Esophagus muscularis mucosa (tissue), 4 donors: ENCODE measurements at regions of chr5 and their contacts with region 1.

Region 1: GRCh38 chr5:16797951-16798350 is 138.1 kb downstream of the MYO10 start:
- DNase-seq: no peak
- H3K4me3 ChIP-seq: no peak overlapping the region
- H3K27ac ChIP-seq: no peak overlapping the region
- H3K4me1 ChIP-seq: no peaks in the 10 kb centered on the region
- H3K27me3 ChIP-seq: no peaks in the 10 kb centered on the region
- CTCF ChIP-seq: no peak
- EP300 ChIP-seq: no peak
- POLR2A ChIP-seq: no peak

Region 2: GRCh38 chr5:16727755-16728325 is 70.1 kb before region 1 on chr5:
- intact Hi-C with region 1: no loop called
- DNase-seq: no peak
- H3K4me3 ChIP-seq: no peak overlapping the region
- H3K27ac ChIP-seq: no peak overlapping the region
- H3K4me1 ChIP-seq: peaks cover 4 to 9% (median 8%) of the 10 kb centered on the region in 4 donors
- H3K27me3 ChIP-seq: peaks cover 0 to 4% (median 0%) of the 10 kb centered on the region in 4 donors
- CTCF ChIP-seq: no peak
- EP300 ChIP-seq: no peak
- POLR2A ChIP-seq: no peak

Region 3: GRCh38 chr5:17132444-17133083 is 334.6 kb after region 1 on chr5:
- intact Hi-C with region 1: loop called (anchors 5 kb)
- DNase-seq: no peak
- H3K4me3 ChIP-seq: no peak overlapping the region
- H3K27ac ChIP-seq: no peak overlapping the region
- H3K4me1 ChIP-seq: no peaks in the 10 kb centered on the region
- H3K27me3 ChIP-seq: peaks cover 0 to 6% (median 0%) of the 10 kb centered on the region in 4 donors
- CTCF ChIP-seq: peak; percentile 37 to 70 (median 50)
- EP300 ChIP-seq: no peak
- POLR2A ChIP-seq: no peak